ENCODE measurements at regions of chr7 and their contacts with region 1.

Region 1: DNA sequence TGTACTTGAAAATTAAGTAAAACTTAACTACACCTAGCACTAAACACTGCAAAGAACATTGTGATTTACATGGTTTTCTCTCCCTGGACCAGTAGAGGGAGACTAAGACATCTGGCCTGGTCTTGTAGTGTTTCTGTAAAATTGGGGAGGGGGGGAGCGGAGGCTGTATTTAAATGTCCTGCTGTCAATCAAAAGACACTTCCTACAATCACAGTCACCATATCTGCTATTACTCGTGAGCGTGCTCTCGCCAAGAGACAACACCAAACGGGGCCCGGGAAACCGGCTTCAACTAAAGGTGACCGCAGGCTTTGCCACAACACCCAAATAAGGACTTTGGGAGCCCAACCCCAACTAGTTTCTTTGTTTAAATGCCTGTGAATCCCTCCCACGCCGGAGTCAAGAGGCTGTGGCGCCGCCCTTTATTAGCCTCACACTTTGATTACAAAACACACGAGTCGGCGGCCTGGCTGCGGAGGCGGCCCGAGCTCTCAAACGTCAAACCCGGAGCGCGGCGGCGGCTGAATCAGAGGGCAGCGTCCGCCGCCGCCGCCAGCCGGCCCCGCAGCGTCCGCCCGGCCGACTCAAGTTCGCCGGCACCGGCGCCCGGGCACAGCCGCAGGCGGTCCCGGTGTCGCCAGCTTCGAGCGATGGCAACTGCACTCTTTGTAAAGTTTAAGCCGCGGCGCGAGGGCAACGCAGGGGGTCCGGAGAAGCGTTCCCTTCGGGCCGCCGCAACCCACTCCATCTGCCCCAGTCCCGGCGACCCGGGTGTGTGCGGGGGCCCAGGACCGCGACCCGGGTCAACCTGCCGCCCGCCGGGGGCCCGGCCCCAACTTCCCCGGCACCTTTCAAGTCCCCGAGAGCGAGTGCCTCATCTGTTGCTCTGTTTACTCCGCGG is 1.3 kb downstream of the KDM7A start:
- DNase-seq: peak; percentile 95
- H3K4me3 ChIP-seq: peak overlapping the region; percentile 72 to 95 (median 94)
- H3K27ac ChIP-seq: peak overlapping the region; percentile 79
- H3K4me1 ChIP-seq: peaks cover 8% of the 10 kb centered on the region
- H3K27me3 ChIP-seq: peaks cover 0 to 3% of the 10 kb centered on the region in 2 experiments
- CTCF ChIP-seq: peak; percentile 60 to 75
- POLR2A ChIP-seq: peak; percentile 54

Region 2: DNA sequence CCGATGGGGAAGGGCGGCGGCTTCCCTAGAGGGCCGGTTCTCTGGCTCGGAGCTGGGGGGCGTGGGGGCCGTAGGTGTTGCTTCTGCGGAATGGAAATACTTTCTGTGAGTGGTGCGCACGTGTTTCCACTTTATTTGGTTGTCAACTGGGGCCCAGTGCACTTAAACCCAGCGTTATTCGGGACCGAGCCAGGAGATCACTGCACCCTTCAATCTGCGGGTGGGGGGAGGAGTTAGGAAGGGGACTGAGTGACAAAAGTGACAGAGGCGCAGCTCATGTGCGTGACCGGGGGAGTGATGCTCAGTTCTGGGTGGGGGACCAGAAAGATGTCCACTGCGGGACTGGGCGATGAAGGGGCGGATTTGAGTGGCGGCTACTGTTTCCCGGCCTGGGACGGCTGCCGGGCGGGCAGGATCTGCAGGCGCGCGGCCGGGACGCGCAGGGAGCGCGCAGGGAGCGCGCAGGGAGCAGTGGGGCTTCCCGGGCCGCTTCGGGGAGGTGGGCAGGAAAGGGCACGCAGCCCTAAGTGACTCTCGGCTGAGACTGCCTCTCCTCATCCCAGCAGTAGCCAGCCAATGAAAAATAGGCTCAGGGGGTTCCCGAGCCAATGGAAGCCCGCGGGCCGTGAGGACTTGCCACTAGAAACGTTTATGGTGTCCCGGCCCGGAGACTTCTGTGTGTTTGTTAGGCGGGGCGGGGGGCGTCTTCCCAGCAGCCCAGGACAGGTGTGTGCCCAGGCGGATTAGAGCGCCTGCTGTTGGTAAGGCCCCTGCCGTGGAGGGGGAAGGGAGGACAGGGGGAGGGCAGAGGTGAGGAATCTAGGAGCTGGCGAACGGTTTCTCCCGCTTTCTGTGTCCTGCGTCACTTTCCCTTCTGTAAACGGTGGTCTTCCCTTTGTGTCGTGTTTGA is 55.6 kb after region 1 on chr7:
- CTCF ChIA-PET with region 1: no interaction called
- POLR2A ChIA-PET with region 1: no interaction called
- dilution Hi-C with region 1: no loop called
- intact Hi-C with region 1: loop called (anchors 1 kb)
- DNase-seq: peak; percentile 49
- H3K4me3 ChIP-seq: peak overlapping the region; percentile 35 to 65 (median 60)
- H3K27ac ChIP-seq: no peak overlapping the region
- H3K4me1 ChIP-seq: peaks cover 6% of the 10 kb centered on the region
- H3K27me3 ChIP-seq: peaks cover 18 to 21% of the 10 kb centered on the region in 2 experiments
- CTCF ChIP-seq: no peak
- POLR2A ChIP-seq: no peak

Region 3: DNA sequence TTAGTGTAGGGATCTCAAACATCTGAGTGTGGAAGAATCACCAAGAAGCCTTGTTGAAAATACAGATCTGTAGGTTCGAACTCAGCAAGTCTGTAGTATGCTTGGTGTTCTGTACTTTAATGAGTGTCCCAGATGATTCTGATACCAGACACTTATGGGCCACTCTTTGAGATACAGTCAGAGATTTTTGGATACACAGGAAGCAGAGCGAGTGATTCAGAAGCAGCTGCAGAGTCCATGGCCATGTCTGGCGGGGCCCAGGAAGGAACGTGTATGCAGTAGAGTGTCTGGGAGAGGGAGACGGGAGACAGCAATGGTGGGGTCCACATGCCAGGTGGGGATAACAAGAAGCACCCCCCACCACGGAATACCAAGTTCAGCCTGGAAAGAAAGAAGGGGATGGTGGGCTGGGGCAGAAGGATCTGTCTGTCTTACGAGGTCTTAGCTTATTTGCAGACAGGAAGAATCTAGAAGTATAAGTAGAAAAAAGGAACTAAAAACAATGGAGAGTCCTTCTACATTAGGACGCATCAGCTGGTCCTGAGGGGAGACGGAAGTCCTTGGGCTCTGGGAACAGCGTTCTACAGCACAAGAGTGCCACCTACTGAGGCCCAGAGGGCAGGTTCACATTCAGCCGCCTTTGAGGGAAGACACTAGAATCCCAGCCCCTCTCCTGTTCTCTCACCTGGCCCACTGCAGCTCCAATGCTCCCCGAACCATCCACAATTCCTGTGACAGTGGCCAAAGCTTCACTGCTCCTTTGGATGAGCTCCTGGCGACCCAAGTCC is 167.4 kb after region 1 on chr7:
- CTCF ChIA-PET with region 1: interaction called, 3 read pairs
- POLR2A ChIA-PET with region 1: no interaction called
- dilution Hi-C with region 1: no loop called
- intact Hi-C with region 1: loop called (anchors 1 kb)
- DNase-seq: peak; percentile 31
- H3K4me3 ChIP-seq: no peak overlapping the region
- H3K27ac ChIP-seq: no peak overlapping the region
- H3K4me1 ChIP-seq: peaks cover 6% of the 10 kb centered on the region
- H3K27me3 ChIP-seq: no peaks in the 10 kb centered on the region
- CTCF ChIP-seq: peak; percentile 40 to 60
- POLR2A ChIP-seq: no peak

Region 4: DNA sequence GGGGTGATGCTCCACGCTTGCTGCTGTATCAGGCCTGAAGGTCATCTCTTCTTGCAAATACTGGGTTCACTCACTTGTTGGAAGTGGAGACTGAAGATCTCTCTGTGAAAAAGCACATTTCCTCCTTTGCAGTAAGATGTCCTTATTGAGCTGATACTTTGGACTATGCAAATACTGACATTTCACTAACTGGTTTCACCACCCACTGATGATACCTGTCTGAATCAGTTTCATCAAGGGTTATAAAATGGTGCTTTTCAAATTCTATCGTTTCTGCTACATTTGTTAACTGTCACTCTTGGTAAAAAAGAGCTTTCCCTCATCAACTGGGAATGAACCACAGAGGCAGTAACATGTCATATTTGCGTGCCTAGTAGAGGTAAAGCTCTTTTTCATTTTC is 263.9 kb after region 1 on chr7:
- CTCF ChIA-PET with region 1: no interaction called
- POLR2A ChIA-PET with region 1: no interaction called
- dilution Hi-C with region 1: no loop called
- intact Hi-C with region 1: loop called (anchors 2 kb)
- DNase-seq: no peak
- H3K4me3 ChIP-seq: no peak overlapping the region
- H3K27ac ChIP-seq: no peak overlapping the region
- H3K4me1 ChIP-seq: no peaks in the 10 kb centered on the region
- H3K27me3 ChIP-seq: peaks cover 0 to 2% of the 10 kb centered on the region in 2 experiments
- CTCF ChIP-seq: no peak
- POLR2A ChIP-seq: no peak

Region 5: DNA sequence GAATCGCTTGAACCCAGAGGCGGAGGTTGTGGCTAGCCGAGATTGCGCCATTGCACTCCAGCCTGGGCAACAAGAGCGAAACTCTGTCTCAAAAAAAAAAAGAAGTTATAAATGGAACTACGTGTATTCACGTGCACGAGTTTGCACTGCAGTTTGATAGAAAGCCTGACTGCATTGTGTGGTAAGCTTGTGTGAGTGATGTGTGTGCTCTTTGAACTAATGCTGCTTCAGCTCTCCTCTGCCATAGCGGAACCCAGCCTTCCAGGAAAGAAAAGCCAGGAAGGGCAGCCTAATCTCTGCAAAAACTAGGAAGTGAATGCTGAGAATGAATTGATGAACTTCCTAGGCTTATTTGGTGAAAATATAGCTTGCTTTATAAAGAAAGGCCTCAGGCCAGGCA is 319.4 kb after region 1 on chr7:
- CTCF ChIA-PET with region 1: no interaction called
- POLR2A ChIA-PET with region 1: no interaction called
- dilution Hi-C with region 1: no loop called
- intact Hi-C with region 1: loop called (anchors 1 kb)
- DNase-seq: no peak
- H3K4me3 ChIP-seq: no peak overlapping the region
- H3K27ac ChIP-seq: no peak overlapping the region
- H3K4me1 ChIP-seq: no peaks in the 10 kb centered on the region
- H3K27me3 ChIP-seq: no peaks in the 10 kb centered on the region
- CTCF ChIP-seq: no peak
- POLR2A ChIP-seq: no peak

Measured in endothelial cell of umbilical vein (primary cell).